CD4-positive, alpha-beta T cell (primary cell): ENCODE measurements at regions of chr9 and their contacts with region 1.

Region 1: GRCh38 chr9:5437254-5438216 is at the start of gene PLGRKT:
- DNase-seq: peak; percentile 80 to 96 (median 86)
- ATAC-seq: peak; percentile 91
- H3K4me3 ChIP-seq: peak within 1 kb of the TSS; percentile 81
- H3K4me3 Mint-ChIP-seq: peak within 1 kb of the TSS; percentile 94
- H3K27ac ChIP-seq: peak within 1 kb of the TSS; percentile 89 to 93
- H3K27ac Mint-ChIP-seq: peak within 1 kb of the TSS; percentile 97
- H3K4me1 ChIP-seq: peaks cover 29% of the 10 kb centered on the region
- H3K4me1 Mint-ChIP-seq: peaks cover 46% of the 10 kb centered on the region
- H3K27me3 ChIP-seq: no peaks in the 10 kb centered on the region
- H3K27me3 Mint-ChIP-seq: no peaks in the 10 kb centered on the region
- CTCF ChIP-seq: peak; percentile 18
- total RNA-seq, gene PLGRKT: 13.8 to 15.6 TPM

Region 2: DNA sequence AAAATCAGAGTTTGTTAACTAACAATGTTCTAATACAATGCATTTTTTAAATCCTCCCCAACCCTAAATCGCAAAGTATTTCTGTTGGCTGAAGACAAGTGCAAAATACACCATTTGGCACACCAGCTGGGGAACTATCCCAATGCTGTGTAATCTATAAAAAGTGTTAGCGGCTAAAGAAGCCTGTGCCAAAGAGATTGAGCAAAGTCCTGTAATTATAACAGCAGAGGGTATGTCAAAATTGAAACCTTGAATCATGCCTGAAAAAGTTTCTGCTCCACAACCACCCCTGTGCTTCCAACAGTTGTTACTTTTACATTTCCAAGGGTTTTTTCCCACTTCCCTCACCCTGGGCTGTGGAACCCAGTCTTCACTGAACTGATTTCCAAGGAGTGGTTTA is 858.5 kb before region 1 on chr9:
- CTCF ChIA-PET with region 1: no interaction called
- POLR2A ChIA-PET with region 1: no interaction called
- intact Hi-C with region 1: no loop called
- DNase-seq: no peak
- ATAC-seq: no peak
- H3K4me3 ChIP-seq: no peak overlapping the region
- H3K4me3 Mint-ChIP-seq: no peak overlapping the region
- H3K27ac ChIP-seq: no peak overlapping the region
- H3K27ac Mint-ChIP-seq: no peak overlapping the region
- H3K4me1 ChIP-seq: peaks cover 2% of the 10 kb centered on the region
- H3K4me1 Mint-ChIP-seq: peaks cover 5% of the 10 kb centered on the region
- H3K27me3 ChIP-seq: no peaks in the 10 kb centered on the region
- H3K27me3 Mint-ChIP-seq: no peaks in the 10 kb centered on the region
- CTCF ChIP-seq: no peak

Region 3: GRCh38 chr9:4762108-4762885 is 675.2 kb before region 1 on chr9:
- CTCF ChIA-PET with region 1: no interaction called
- POLR2A ChIA-PET with region 1: no interaction called
- intact Hi-C with region 1: loop called in 1 of 2 experiments (anchors 5 kb)
- DNase-seq: peak; percentile 71 to 89 (median 78)
- ATAC-seq: peak; percentile 87
- H3K4me3 ChIP-seq: no peak overlapping the region
- H3K4me3 Mint-ChIP-seq: peak overlapping the region; percentile 3
- H3K27ac ChIP-seq: no peak overlapping the region
- H3K27ac Mint-ChIP-seq: no peak overlapping the region
- H3K4me1 ChIP-seq: peaks cover 20% of the 10 kb centered on the region
- H3K4me1 Mint-ChIP-seq: peaks cover 11% of the 10 kb centered on the region
- H3K27me3 ChIP-seq: no peaks in the 10 kb centered on the region
- H3K27me3 Mint-ChIP-seq: no peaks in the 10 kb centered on the region
- CTCF ChIP-seq: peak; percentile 84

Region 4: DNA sequence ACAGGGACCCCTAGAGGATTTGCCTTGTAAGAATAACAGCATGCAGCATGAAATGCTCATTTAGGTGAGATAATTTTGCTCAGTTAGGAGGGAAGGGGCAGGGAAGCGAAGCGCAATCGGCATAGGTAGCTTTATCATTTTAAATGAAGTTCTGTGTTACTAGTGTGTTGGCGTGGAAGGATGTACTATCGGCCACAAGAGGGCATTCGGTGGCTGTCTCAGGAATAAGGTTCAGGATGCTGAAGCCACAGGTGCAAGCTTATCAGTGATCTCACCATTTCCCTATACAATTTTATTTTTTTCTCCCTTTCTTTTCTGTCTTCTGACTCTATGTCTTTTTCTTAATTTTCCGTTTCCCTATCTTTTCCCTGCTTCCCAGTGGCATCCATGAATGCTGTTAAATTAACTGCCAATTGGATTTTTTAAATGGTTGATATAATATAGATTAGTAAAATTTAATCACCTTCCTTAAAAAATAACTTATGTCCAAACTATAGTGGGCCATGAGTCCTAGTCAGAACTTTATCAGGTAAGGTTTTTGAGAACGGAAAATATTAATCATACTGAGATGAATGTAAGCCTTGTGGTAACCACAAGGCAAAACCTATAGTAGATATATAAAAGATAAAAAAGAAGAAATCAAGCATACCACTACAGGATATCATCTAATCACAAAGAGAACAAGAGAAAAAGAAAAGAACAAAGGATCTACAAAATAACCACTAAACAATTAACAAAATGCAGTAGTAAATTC is 250.9 kb before region 1 on chr9:
- CTCF ChIA-PET with region 1: interaction called, 3 read pairs
- POLR2A ChIA-PET with region 1: interaction called, 8 read pairs
- intact Hi-C with region 1: loop called in 1 of 2 experiments (anchors 5 kb)
- DNase-seq: peak; percentile 39 to 86 (median 54)
- ATAC-seq: peak; percentile 96
- H3K4me3 ChIP-seq: no peak overlapping the region
- H3K4me3 Mint-ChIP-seq: no peak overlapping the region
- H3K27ac ChIP-seq: no peak overlapping the region
- H3K27ac Mint-ChIP-seq: no peak overlapping the region
- H3K4me1 ChIP-seq: peaks cover 5% of the 10 kb centered on the region
- H3K4me1 Mint-ChIP-seq: peaks cover 12% of the 10 kb centered on the region
- H3K27me3 ChIP-seq: no peaks in the 10 kb centered on the region
- H3K27me3 Mint-ChIP-seq: no peaks in the 10 kb centered on the region
- CTCF ChIP-seq: peak; percentile 83

Region 5: GRCh38 chr9:5326893-5327548 is 110.5 kb before region 1 on chr9:
- CTCF ChIA-PET with region 1: no interaction called
- POLR2A ChIA-PET with region 1: interaction called, 3 read pairs
- intact Hi-C with region 1: loop called in 1 of 2 experiments (anchors 5 kb)
- DNase-seq: peak in 9 of 14 experiments; percentile 9 to 82 (median 37)
- ATAC-seq: peak; percentile 84
- H3K4me3 ChIP-seq: no peak overlapping the region
- H3K4me3 Mint-ChIP-seq: peak overlapping the region; percentile 11
- H3K27ac ChIP-seq: peak overlapping the region in 1 of 2 donors; percentile 13
- H3K27ac Mint-ChIP-seq: peak overlapping the region; percentile 51
- H3K4me1 ChIP-seq: peaks cover 18% of the 10 kb centered on the region
- H3K4me1 Mint-ChIP-seq: peaks cover 44% of the 10 kb centered on the region
- H3K27me3 ChIP-seq: no peaks in the 10 kb centered on the region
- H3K27me3 Mint-ChIP-seq: no peaks in the 10 kb centered on the region
- CTCF ChIP-seq: no peak

Region 6: GRCh38 chr9:5450359-5451091 is 13.0 kb after region 1 on chr9 and contains the start of gene CD274:
- CTCF ChIA-PET with region 1: interaction called, 16 read pairs
- POLR2A ChIA-PET with region 1: interaction called, 114 read pairs
- intact Hi-C with region 1: loop called in 1 of 2 experiments (anchors 2 kb)
- DNase-seq: peak; percentile 57 to 92 (median 70)
- ATAC-seq: peak; percentile 94
- H3K4me3 ChIP-seq: peak within 1 kb of the TSS; percentile 69
- H3K4me3 Mint-ChIP-seq: peak within 1 kb of the TSS; percentile 88
- H3K27ac ChIP-seq: peak within 1 kb of the TSS; percentile 77 to 87
- H3K27ac Mint-ChIP-seq: peak within 1 kb of the TSS; percentile 95
- H3K4me1 ChIP-seq: peaks cover 34% of the 10 kb centered on the region
- H3K4me1 Mint-ChIP-seq: peaks cover 74% of the 10 kb centered on the region
- H3K27me3 ChIP-seq: no peaks in the 10 kb centered on the region
- H3K27me3 Mint-ChIP-seq: no peaks in the 10 kb centered on the region
- CTCF ChIP-seq: peak; percentile 76
- total RNA-seq, gene CD274: 5.3 to 6.3 TPM

Region 7: DNA sequence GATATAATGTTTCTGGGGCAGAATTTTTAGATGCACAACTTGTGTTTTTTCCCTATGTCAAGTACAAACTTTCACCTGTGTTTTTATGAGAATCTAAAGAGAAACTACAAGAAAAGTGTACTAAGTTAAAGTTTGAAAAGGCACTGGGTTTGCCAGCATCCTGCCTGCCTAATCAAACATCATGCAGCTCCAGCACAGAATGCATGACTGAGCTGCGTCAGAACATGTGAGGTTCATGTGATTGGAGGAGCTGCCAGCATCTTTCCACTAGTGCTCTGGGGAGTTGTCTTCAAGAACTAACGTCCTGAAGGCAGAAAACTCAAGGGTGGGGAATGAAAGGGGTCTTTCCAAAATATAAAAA is 145.3 kb after region 1 on chr9:
- CTCF ChIA-PET with region 1: no interaction called
- POLR2A ChIA-PET with region 1: interaction called, 68 read pairs
- intact Hi-C with region 1: loop called in 1 of 2 experiments (anchors 5 kb)
- DNase-seq: peak in 12 of 14 experiments; percentile 10 to 81 (median 30)
- ATAC-seq: peak; percentile 92
- H3K4me3 ChIP-seq: no peak overlapping the region
- H3K4me3 Mint-ChIP-seq: peak overlapping the region; percentile 1
- H3K27ac ChIP-seq: peak overlapping the region in 1 of 2 donors; percentile 16
- H3K27ac Mint-ChIP-seq: peak overlapping the region; percentile 81
- H3K4me1 ChIP-seq: peaks cover 32% of the 10 kb centered on the region
- H3K4me1 Mint-ChIP-seq: peaks cover 70% of the 10 kb centered on the region
- H3K27me3 ChIP-seq: no peaks in the 10 kb centered on the region
- H3K27me3 Mint-ChIP-seq: no peaks in the 10 kb centered on the region
- CTCF ChIP-seq: no peak